ENCODE measurements at regions of chr12 and their contacts with region 1.

Region 1: DNA sequence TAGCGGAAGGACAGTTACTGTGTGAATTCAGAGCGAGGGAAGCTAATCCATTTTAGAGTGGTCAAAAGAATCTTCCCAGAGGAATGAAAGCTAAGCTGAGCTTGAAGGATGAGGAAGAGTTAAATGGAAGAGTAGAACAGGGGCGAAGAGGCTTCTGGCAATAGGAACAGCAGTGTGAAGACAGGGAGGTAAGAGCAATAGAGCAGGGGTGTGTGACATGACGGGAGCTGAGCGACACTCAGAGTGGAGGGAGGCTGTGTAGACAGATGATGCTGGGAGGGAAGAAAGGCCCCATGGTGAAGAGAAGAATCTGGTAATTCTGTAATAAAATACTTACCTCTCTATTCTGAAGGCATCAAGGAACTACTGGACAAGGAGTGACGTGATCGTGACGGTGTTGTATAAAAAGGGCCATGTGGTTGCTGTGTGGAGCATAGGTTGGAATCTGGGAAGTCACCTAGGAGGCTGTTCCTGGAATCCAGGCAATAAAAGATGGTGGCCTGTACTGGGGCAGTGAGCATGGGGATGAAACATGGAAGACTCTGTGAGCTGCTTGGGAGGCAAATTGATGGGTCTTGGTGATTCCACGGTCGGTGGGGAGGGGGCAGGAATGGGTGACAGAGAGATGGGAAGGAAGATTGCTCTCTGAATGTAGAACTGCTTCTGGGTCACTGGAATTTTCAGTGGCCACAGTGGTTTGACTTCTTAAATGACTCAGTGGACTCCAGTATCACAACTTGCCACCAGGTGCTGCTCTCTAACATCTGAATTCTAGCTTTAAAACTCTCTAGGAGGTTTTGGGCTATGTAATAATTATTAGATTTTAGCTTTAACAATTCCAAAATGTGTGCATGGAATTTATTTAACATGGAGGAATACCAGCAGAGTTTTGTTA is 164.1 kb downstream of the ATP23 start:
- DNase-seq: no peak
- H3K4me3 ChIP-seq: no peak overlapping the region
- H3K27ac ChIP-seq: no peak overlapping the region
- H3K4me1 ChIP-seq: no peaks in the 10 kb centered on the region
- H3K27me3 ChIP-seq: no peaks in the 10 kb centered on the region
- CTCF ChIP-seq: no peak
- EP300 ChIP-seq: no peak
- POLR2A ChIP-seq: no peak

Region 2: GRCh38 chr12:58009405-58010195 is 95.9 kb before region 1 on chr12:
- in situ Hi-C with region 1: loop called in 1 of 4 experiments (anchors 25 kb)
- intact Hi-C with region 1: no loop called
- DNase-seq: no peak
- H3K4me3 ChIP-seq: no peak overlapping the region
- H3K27ac ChIP-seq: no peak overlapping the region
- H3K4me1 ChIP-seq: no peaks in the 10 kb centered on the region
- H3K27me3 ChIP-seq: no peaks in the 10 kb centered on the region
- CTCF ChIP-seq: no peak
- EP300 ChIP-seq: no peak
- POLR2A ChIP-seq: no peak

Region 3: GRCh38 chr12:58211211-58211610 is 105.7 kb after region 1 on chr12:
- in situ Hi-C with region 1: no loop called
- intact Hi-C with region 1: no loop called
- DNase-seq: no peak
- H3K4me3 ChIP-seq: no peak overlapping the region
- H3K27ac ChIP-seq: no peak overlapping the region
- H3K4me1 ChIP-seq: no peaks in the 10 kb centered on the region
- H3K27me3 ChIP-seq: no peaks in the 10 kb centered on the region
- CTCF ChIP-seq: no peak
- EP300 ChIP-seq: no peak
- POLR2A ChIP-seq: no peak

Measured in transverse colon (tissue), 4 donors.